Adrenal gland (tissue), 19 donors: ENCODE measurements at regions of chr12 and their contacts with region 1.

Region 1: DNA sequence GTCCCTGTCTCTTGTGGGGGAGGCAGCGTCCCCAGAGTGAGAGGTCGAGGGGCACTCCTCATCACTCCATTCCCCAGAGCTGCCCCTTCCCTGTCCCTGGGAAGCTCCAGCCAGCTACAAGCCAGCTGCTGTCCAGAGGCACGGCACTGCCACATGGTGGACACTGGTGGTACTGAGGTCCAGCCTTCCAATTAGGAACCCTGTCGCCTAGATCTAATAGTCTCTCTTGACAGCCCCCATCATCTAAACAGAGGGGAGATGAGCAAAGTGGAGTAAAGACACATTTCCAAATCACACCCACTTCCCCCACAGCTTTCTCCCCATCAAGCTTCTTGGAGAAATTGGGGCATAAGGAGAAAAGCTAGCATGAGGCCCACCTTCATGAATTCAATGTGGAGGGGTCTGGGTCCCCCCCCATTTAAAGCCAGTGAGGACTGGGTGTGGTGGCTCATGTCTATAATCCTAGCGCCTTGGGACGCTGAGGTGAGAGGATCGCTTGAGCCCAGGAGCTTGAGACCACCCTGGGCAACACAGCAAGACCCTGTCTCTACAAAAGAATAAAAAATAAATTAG is 2.1 kb upstream of the INHBE start:
- DNase-seq: peak; percentile 75 to 93 (median 84)
- H3K4me3 ChIP-seq: no peak overlapping the region
- H3K27ac ChIP-seq: no peak overlapping the region
- H3K4me1 ChIP-seq: no peaks in the 10 kb centered on the region
- H3K27me3 ChIP-seq: no peaks in the 10 kb centered on the region
- CTCF ChIP-seq: peak; percentile 83 to 96 (median 92)
- POLR2A ChIP-seq: no peak

Region 2: DNA sequence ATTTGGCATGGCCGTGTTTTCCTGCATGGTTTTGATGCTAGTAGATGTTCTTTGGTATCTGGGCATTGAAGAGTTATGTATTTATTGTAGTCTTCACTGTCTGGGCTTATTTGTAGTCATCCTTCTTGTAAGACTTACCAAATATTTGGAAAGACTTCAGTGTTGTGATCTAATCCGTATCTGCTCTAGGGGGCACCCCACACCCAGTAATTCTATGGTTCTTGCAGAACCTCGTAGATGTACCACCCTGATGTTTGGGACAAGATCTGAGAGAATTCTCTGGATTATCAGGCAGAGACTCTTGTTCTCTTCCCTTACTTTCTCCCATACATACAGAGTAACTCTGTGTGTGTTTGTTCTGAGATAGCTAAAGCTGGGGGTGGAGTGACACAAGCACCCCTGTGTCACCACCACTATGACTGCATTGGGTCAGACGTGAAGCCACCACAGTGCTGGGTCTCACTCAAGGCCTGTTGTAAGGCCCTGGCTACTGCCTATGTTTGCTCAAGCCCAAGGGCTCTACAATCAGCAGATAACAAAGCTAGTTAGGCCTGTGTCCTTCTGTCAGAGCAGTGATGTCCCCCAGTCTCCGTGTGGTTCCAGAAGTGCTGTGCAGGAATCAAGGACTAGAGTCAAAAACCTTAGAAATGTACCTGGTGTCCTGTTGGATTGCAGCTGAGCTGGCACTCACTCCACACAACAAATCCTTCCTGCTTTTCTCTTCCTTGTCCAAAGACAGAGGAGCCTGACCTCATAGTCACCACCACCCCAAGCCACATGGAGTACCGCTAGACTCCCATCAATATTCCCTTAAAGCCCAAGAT is 505.2 kb before region 1 on chr12:
- intact Hi-C with region 1: no loop called
- DNase-seq: no peak
- H3K4me3 ChIP-seq: no peak overlapping the region
- H3K27ac ChIP-seq: no peak overlapping the region
- H3K4me1 ChIP-seq: no peaks in the 10 kb centered on the region
- H3K27me3 ChIP-seq: no peaks in the 10 kb centered on the region
- CTCF ChIP-seq: no peak
- POLR2A ChIP-seq: no peak

Region 3: GRCh38 chr12:57213058-57213715 is 239.8 kb before region 1 on chr12:
- intact Hi-C with region 1: loop called in 1 of 2 experiments (anchors 5 kb)
- DNase-seq: peak; percentile 85 to 96 (median 89)
- H3K4me3 ChIP-seq: no peak overlapping the region
- H3K27ac ChIP-seq: no peak overlapping the region
- H3K4me1 ChIP-seq: peaks cover 6 to 21% of the 10 kb centered on the region in 2 donors
- H3K27me3 ChIP-seq: peaks cover 24% of the 10 kb centered on the region
- CTCF ChIP-seq: peak; percentile 91 to 97 (median 93)
- POLR2A ChIP-seq: no peak

Region 4: DNA sequence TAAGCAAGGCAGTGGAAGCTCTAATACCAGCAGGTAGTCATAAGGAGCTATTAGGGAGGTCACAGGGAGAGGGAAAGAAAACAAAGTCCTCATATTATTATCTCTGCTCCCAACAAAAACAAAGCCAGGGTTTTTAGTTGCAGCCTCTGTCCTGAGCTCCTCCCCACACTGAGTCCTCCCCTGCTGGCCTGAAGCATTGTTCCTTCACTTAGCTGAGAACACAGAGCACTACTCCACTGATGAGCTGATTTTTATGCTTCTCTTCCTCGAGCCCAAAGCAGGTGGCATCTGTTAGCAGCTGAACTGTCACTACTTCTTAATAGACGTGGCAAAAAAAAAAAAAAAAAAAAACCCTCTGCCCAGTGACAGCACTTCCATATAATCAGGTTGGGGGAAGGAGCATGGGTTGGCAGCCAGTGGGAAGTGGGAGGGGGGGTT is 191.6 kb before region 1 on chr12:
- intact Hi-C with region 1: loop called in 1 of 2 experiments (anchors 5 kb)
- DNase-seq: peak in 1 of 7 donors; percentile 68
- H3K4me3 ChIP-seq: no peak overlapping the region
- H3K27ac ChIP-seq: no peak overlapping the region
- H3K4me1 ChIP-seq: peaks cover 11 to 16% of the 10 kb centered on the region in 2 donors
- H3K27me3 ChIP-seq: no peaks in the 10 kb centered on the region
- CTCF ChIP-seq: no peak
- POLR2A ChIP-seq: no peak

Region 5: GRCh38 chr12:57309420-57309819 is 143.6 kb before region 1 on chr12:
- intact Hi-C with region 1: loop called (anchors 2 to 5 kb)
- DNase-seq: no peak
- H3K4me3 ChIP-seq: no peak overlapping the region
- H3K27ac ChIP-seq: no peak overlapping the region
- H3K4me1 ChIP-seq: no peaks in the 10 kb centered on the region
- H3K27me3 ChIP-seq: no peaks in the 10 kb centered on the region
- CTCF ChIP-seq: no peak
- POLR2A ChIP-seq: no peak